ENCODE measurements at regions of chr7 and their contacts with region 1.

Region 1: GRCh38 chr7:83936056-83936708 is 258.4 kb downstream of the SEMA3A start:
- DNase-seq: peak; percentile 68 to 76
- H3K4me3 ChIP-seq: no peak overlapping the region
- H3K4me3 Mint-ChIP-seq: no peak overlapping the region
- H3K27ac Mint-ChIP-seq: no peak overlapping the region
- H3K4me1 ChIP-seq: 0 out of 2 replicates have a peak, but pooled peaks cover 4% of the 10 kb centered on the region
- H3K4me1 Mint-ChIP-seq: peaks cover 10% of the 10 kb centered on the region
- H3K27me3 ChIP-seq: no peaks in the 10 kb centered on the region
- H3K27me3 Mint-ChIP-seq: no peaks in the 10 kb centered on the region
- CTCF ChIP-seq: peak; percentile 85 to 94

Region 2: DNA sequence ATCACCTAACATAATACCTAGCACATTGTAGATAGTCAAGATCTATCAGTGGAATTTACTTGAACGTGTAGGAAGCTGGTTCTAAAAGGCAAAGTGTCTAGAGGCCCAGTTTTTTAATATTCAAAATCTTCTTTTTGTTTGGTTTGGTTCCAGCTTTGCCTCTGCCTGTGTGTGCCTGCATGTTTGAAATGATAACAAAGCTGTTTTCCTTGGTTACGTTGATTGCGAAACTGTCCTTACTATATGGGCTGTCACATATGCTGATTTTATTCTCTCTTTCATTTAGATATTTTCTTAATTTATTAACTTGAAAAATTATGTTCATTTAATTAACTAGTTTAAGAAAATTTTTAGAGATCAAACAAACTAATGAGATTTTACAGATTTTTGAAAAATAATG is 21.2 kb after region 1 on chr7:
- CTCF ChIA-PET with region 1: no interaction called
- POLR2A ChIA-PET with region 1: no interaction called
- intact Hi-C with region 1: no loop called
- DNase-seq: peak in 1 of 2 experiments; percentile 21
- H3K4me3 ChIP-seq: no peak overlapping the region
- H3K4me3 Mint-ChIP-seq: no peak overlapping the region
- H3K27ac Mint-ChIP-seq: peak overlapping the region; percentile 43
- H3K4me1 ChIP-seq: peaks cover 22% of the 10 kb centered on the region
- H3K4me1 Mint-ChIP-seq: peaks cover 11% of the 10 kb centered on the region
- H3K27me3 ChIP-seq: no peaks in the 10 kb centered on the region
- H3K27me3 Mint-ChIP-seq: no peaks in the 10 kb centered on the region
- CTCF ChIP-seq: no peak

Region 3: DNA sequence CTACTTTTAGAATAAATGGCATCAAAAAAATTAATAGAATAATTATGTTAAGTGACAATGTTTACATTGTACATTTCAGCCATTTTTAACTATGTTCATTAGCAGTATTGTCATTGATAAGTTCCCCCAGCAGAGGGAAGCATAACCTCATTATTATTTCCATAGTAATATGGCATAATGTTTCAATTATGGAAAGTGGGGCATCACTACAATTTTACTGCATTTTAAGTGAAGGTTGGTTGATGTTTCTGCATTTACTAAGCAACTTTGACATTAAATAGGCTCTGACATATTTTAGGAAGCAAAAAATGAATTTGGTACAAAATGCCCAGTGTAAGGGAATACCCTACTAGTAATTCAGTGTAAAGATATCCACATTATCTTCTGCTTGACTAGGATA is 40.1 kb after region 1 on chr7:
- CTCF ChIA-PET with region 1: no interaction called
- POLR2A ChIA-PET with region 1: no interaction called
- intact Hi-C with region 1: loop called (anchors 1 kb)
- DNase-seq: peak in 1 of 2 experiments; percentile 63
- H3K4me3 ChIP-seq: no peak overlapping the region
- H3K4me3 Mint-ChIP-seq: no peak overlapping the region
- H3K27ac Mint-ChIP-seq: no peak overlapping the region
- H3K4me1 ChIP-seq: no peaks in the 10 kb centered on the region
- H3K4me1 Mint-ChIP-seq: no peaks in the 10 kb centered on the region
- H3K27me3 ChIP-seq: no peaks in the 10 kb centered on the region
- H3K27me3 Mint-ChIP-seq: no peaks in the 10 kb centered on the region
- CTCF ChIP-seq: peak; percentile 42 to 69

Region 4: GRCh38 chr7:84454174-84454959 is 518.2 kb after region 1 on chr7:
- CTCF ChIA-PET with region 1: no interaction called
- POLR2A ChIA-PET with region 1: no interaction called
- intact Hi-C with region 1: loop called (anchors 1 kb)
- DNase-seq: no peak
- H3K4me3 ChIP-seq: no peak overlapping the region
- H3K4me3 Mint-ChIP-seq: no peak overlapping the region
- H3K27ac Mint-ChIP-seq: no peak overlapping the region
- H3K4me1 ChIP-seq: no peaks in the 10 kb centered on the region
- H3K4me1 Mint-ChIP-seq: no peaks in the 10 kb centered on the region
- H3K27me3 ChIP-seq: no peaks in the 10 kb centered on the region
- H3K27me3 Mint-ChIP-seq: no peaks in the 10 kb centered on the region
- CTCF ChIP-seq: no peak

Region 5: GRCh38 chr7:85023045-85023712 is 1087.0 kb after region 1 on chr7:
- CTCF ChIA-PET with region 1: no interaction called
- POLR2A ChIA-PET with region 1: no interaction called
- intact Hi-C with region 1: loop called (anchors 1 kb)
- DNase-seq: peak in 1 of 2 experiments; percentile 63
- H3K4me3 ChIP-seq: no peak overlapping the region
- H3K4me3 Mint-ChIP-seq: no peak overlapping the region
- H3K27ac Mint-ChIP-seq: no peak overlapping the region
- H3K4me1 ChIP-seq: no peaks in the 10 kb centered on the region
- H3K4me1 Mint-ChIP-seq: no peaks in the 10 kb centered on the region
- H3K27me3 ChIP-seq: no peaks in the 10 kb centered on the region
- H3K27me3 Mint-ChIP-seq: no peaks in the 10 kb centered on the region
- CTCF ChIP-seq: peak; percentile 63 to 72